ENCODE measurements at regions of chr14 and their contacts with region 1.

Region 1: DNA sequence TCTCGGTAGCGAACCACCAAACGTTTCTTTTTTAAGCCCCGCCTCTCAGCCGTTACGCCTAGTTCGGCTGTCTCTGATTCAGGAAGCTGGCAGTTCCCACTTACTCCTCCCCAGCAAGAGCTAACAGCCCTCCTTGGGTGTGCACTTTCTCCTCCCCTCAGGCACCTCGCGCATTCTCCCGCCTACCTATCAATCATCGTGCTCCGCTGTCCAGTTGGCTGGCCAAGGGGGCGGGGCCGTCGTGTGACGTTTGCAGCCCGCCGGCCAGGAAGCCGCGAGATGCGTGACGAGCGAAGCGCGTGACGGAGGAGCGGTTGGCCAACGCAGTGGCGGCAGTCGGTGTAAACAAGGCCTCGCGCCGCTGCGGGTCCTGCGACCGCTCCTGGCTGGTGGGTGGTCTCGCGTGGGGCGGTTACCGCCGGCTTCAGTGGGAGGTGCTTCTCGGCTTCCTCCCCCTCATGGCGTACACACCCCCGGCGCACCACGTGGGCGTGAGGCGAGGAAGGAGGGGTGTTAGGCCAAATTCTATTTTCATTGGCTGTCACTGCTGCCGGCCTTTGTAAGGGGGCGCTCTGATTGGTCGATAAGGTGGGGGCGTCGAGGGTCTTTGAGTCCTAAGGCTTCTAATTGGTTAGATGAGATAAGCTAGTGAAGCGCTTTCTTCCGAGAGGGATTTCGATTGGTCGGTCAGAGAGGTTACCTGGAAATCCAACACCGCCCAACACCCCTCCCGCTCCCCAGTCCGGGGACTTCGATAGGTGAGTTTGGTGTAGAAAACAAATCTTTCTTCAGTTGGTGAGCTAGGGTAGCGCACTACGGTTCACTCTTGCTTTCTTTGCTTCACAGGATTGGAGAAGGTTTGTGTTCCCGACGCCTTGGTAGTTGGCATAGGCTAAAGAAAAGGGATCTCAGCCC is at the starts of genes DCAF11 and NRL:
- DNase-seq: peak; percentile 97 to 100 (median 99)
- ATAC-seq: peak; percentile 85 to 88 (median 87)
- H3K4me3 ChIP-seq: peak within 1 kb of the TSS; percentile 94 to 99
- H3K4me3 Mint-ChIP-seq: peak within 1 kb of the TSS; percentile 90 to 94 (median 93)
- H3K27ac ChIP-seq: peak within 1 kb of the TSS; percentile 99
- H3K27ac Mint-ChIP-seq: peak within 1 kb of the TSS; percentile 98
- H3K4me1 ChIP-seq: peaks cover 12 to 31% of the 10 kb centered on the region in 2 experiments
- H3K4me1 Mint-ChIP-seq: peaks cover 30 to 42% (median 32%) of the 10 kb centered on the region in 3 donors
- H3K27me3 ChIP-seq: no peaks in the 10 kb centered on the region
- H3K27me3 Mint-ChIP-seq: no peaks in the 10 kb centered on the region
- total RNA-seq, gene DCAF11: 78.5 to 94.1 (median 89.6) TPM
- total RNA-seq, gene NRL: 1.9 to 3.7 (median 3.4) TPM

Region 2: DNA sequence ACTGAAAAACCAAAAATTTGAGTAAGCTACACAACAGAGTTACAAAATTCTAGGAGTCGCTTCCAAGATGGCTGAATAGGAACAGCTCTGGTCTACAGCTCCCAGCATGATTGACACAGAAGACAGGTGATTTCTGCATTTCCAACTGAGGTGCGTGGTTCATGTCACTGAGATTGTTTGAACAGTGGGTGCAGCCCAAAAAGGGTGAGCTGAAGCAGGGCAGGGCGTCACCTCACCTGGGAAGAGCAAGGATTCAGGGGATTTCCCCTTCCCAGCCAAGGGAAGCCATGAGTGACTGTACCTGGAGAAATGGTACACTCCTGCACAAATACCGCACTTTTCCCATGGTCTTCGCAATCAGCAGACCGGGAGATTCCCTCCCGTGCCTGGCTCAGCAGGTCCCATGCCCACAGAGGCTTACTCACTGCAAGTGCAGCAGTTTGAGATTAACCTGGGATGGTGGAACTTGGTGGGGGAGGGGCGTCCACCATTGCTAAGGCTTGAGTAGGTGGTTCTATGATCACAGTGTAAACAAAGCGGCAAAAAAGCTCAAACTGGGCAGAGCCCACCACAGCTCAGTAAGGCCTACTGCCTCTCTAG is 172.3 kb before region 1 on chr14:
- CTCF ChIA-PET with region 1: no interaction called
- POLR2A ChIA-PET with region 1: no interaction called
- DNase-seq: no peak
- ATAC-seq: no peak
- H3K4me3 ChIP-seq: no peak overlapping the region
- H3K4me3 Mint-ChIP-seq: no peak overlapping the region
- H3K27ac ChIP-seq: no peak overlapping the region
- H3K27ac Mint-ChIP-seq: no peak overlapping the region
- H3K4me1 ChIP-seq: no peaks in the 10 kb centered on the region
- H3K4me1 Mint-ChIP-seq: peaks cover 16 to 30% (median 18%) of the 10 kb centered on the region in 3 donors
- H3K27me3 ChIP-seq: no peaks in the 10 kb centered on the region
- H3K27me3 Mint-ChIP-seq: no peaks in the 10 kb centered on the region

Region 3: GRCh38 chr14:24127673-24128072 is 12.9 kb after region 1 on chr14:
- CTCF ChIA-PET with region 1: interaction called in 1 of 2 experiments, 3 read pairs
- POLR2A ChIA-PET with region 1: interaction called, 5 to 10 read pairs
- DNase-seq: no peak
- ATAC-seq: no peak
- H3K4me3 ChIP-seq: no peak overlapping the region
- H3K4me3 Mint-ChIP-seq: no peak overlapping the region
- H3K27ac ChIP-seq: no peak overlapping the region
- H3K27ac Mint-ChIP-seq: no peak overlapping the region
- H3K4me1 ChIP-seq: peaks cover 3 to 12% of the 10 kb centered on the region in 2 experiments
- H3K4me1 Mint-ChIP-seq: peaks cover 11 to 19% (median 15%) of the 10 kb centered on the region in 3 donors
- H3K27me3 ChIP-seq: no peaks in the 10 kb centered on the region
- H3K27me3 Mint-ChIP-seq: no peaks in the 10 kb centered on the region

Region 4: DNA sequence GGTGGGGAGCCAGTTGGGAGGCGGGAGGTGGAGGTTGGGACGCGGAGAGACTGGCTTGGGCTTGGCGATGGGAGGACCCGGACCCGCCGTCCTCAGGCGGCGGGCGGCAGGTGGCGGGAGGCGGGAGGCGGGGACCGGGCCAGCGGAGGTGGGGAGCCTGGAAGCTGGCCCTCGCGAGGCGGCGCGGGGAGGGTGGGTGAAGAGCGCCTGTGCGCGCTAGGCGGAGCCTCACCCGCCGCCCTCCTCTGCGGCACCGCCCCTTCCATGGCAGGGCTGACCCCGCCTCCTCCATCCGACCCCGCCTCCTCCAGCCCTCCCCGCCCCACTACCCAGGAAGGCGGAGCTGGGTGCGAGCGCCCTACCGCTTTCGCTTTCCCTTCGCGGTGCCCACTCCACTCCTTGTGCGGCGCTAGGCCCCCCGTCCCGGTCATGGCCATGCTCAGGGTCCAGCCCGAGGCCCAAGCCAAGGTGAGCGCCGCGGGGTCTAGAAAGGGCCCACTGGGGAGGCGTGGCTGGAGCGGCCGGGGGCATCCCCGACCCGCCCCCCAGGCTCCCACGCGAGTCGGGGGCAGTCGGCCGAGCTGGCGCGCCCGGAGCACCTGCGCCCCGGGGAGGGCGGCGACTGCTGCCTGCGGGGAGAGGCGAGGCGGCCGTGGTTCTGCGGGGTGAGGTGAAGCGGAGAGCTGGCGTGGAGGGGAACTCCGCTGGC is 21.2 kb after region 1 on chr14 and contains the start of gene PSME1:
- CTCF ChIA-PET with region 1: interaction called, 7 to 18 read pairs
- POLR2A ChIA-PET with region 1: interaction called, 5 to 10 read pairs
- DNase-seq: peak; percentile 80 to 97 (median 92)
- ATAC-seq: peak; percentile 94 to 98 (median 95)
- H3K4me3 ChIP-seq: peak within 1 kb of the TSS; percentile 78 to 84
- H3K4me3 Mint-ChIP-seq: peak within 1 kb of the TSS; percentile 89 to 97 (median 91)
- H3K27ac ChIP-seq: peak within 1 kb of the TSS; percentile 79
- H3K27ac Mint-ChIP-seq: peak within 1 kb of the TSS; percentile 91 to 95
- H3K4me1 ChIP-seq: peaks cover 22 to 67% of the 10 kb centered on the region in 2 experiments
- H3K4me1 Mint-ChIP-seq: peaks cover 65 to 68% (median 67%) of the 10 kb centered on the region in 3 donors
- H3K27me3 ChIP-seq: no peaks in the 10 kb centered on the region
- H3K27me3 Mint-ChIP-seq: no peaks in the 10 kb centered on the region
- total RNA-seq, gene PSME1: 221 to 291 (median 259) TPM

Region 5: DNA sequence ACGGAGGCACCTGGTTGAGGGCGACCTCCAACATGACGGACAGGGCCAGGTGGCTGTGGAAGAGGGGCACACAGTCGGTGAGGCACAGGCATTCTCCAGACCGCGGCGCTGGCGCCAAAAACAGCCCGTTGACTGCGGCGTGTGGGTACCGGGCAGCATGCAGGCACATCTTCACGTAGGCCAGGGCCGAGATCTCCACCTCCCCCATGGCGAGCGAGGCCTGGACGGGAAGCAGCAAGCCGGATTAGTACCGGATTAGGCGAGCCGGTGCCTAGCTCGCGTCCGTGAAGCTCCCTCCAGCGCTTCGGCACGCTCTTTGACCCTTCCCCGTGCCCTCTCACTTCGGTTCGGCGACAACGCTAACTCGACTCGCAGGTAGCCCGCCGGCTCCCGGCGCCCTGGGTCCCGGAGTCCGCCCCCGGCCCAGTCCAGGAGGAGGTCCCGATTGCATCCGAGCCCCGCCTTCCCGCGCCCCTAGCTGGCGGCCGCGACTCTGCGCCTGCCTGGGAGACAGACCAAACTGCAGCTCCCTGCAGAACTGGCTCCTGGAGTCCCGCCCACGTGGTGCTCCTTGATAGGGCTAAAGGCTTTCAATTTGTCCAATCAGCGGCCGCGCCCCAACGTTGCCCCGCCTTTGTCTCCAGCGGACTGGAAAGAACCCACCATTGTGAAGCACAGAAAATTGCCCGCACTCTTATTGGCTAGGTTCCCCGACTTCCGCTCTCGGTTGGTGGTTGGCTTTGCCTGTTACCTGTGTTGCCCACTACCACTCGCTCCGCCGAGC is 26.5 kb after region 1 on chr14 and contains the start of gene EMC9:
- CTCF ChIA-PET with region 1: interaction called, 7 to 24 read pairs
- POLR2A ChIA-PET with region 1: interaction called, 4 to 23 read pairs
- DNase-seq: peak; percentile 98 to 100 (median 99)
- ATAC-seq: peak; percentile 90 to 93 (median 90)
- H3K4me3 ChIP-seq: peak within 1 kb of the TSS; percentile 69 to 90
- H3K4me3 Mint-ChIP-seq: peak within 1 kb of the TSS; percentile 85 to 97 (median 88)
- H3K27ac ChIP-seq: peak within 1 kb of the TSS; percentile 63
- H3K27ac Mint-ChIP-seq: peak within 1 kb of the TSS; percentile 90 to 92
- H3K4me1 ChIP-seq: peaks cover 22 to 72% of the 10 kb centered on the region in 2 experiments
- H3K4me1 Mint-ChIP-seq: peaks cover 80 to 84% (median 82%) of the 10 kb centered on the region in 3 donors
- H3K27me3 ChIP-seq: no peaks in the 10 kb centered on the region
- H3K27me3 Mint-ChIP-seq: no peaks in the 10 kb centered on the region
- total RNA-seq, gene EMC9: 9.3 to 29.8 (median 20.8) TPM

Region 6: DNA sequence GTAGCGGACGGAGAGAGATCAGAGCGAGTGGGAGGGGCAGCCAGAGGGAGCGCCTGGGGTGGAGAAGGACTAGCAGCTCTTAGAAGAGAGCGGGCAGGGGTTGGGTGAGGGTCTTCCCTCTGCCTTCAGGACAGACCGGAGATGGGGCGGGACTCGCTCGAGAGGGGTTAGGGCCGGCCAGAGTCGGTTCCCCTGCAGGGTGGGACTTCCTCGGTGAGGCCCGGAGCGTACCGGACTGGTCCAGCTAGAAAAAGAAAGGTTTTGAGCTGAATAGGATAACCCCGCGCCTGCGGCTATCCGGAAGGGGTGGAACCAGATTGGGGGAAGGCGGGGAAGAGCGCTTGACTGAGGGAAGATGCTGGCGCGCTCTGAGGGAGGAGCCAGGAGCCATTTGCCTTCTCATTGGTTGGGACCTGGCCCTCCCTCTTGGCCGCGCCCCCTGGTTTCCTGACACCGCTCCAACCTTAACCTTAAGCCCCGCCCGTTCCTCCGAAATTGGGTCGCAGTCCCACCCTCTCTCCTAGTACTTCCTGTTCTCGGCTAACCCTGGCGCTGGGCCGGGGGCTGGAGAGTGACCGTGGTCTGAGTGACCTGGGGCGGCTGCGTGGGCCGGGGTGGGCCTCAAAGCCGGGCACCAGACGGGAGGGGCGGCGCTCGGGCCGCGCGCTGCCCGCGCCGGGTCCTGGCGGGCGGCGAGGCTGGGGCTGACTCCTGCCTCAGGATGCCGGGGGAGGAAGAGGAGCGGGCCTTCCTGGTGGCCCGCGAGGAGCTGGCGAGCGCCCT is 32.4 kb after region 1 on chr14 and contains the start of gene RNF31:
- CTCF ChIA-PET with region 1: interaction called, 3 to 24 read pairs
- POLR2A ChIA-PET with region 1: interaction called, 8 to 23 read pairs
- DNase-seq: peak; percentile 90 to 99 (median 97)
- ATAC-seq: peak; percentile 89 to 93 (median 90)
- H3K4me3 ChIP-seq: peak within 1 kb of the TSS; percentile 69 to 91
- H3K4me3 Mint-ChIP-seq: peak within 1 kb of the TSS; percentile 96 to 99 (median 97)
- H3K27ac ChIP-seq: peak within 1 kb of the TSS; percentile 82
- H3K27ac Mint-ChIP-seq: peak within 1 kb of the TSS; percentile 95 to 99
- H3K4me1 ChIP-seq: peaks cover 17 to 58% of the 10 kb centered on the region in 2 experiments
- H3K4me1 Mint-ChIP-seq: peaks cover 64 to 69% (median 66%) of the 10 kb centered on the region in 3 donors
- H3K27me3 ChIP-seq: no peaks in the 10 kb centered on the region
- H3K27me3 Mint-ChIP-seq: no peaks in the 10 kb centered on the region
- total RNA-seq, gene RNF31: 67.7 to 131 (median 100) TPM

Region 7: GRCh38 chr14:24160850-24161804 is 46.3 kb after region 1 on chr14 and contains the start of gene IRF9:
- CTCF ChIA-PET with region 1: interaction called, 5 to 20 read pairs
- POLR2A ChIA-PET with region 1: interaction called, 3 to 9 read pairs
- DNase-seq: peak; percentile 90 to 99 (median 96)
- ATAC-seq: peak; percentile 89 to 90 (median 90)
- H3K4me3 ChIP-seq: peak within 1 kb of the TSS; percentile 86 to 98
- H3K4me3 Mint-ChIP-seq: peak within 1 kb of the TSS; percentile 92 to 94 (median 92)
- H3K27ac ChIP-seq: peak within 1 kb of the TSS; percentile 89
- H3K27ac Mint-ChIP-seq: peak within 1 kb of the TSS; percentile 98 to 99
- H3K4me1 ChIP-seq: peaks cover 8 to 61% of the 10 kb centered on the region in 2 experiments
- H3K4me1 Mint-ChIP-seq: peaks cover 54 to 58% (median 55%) of the 10 kb centered on the region in 3 donors
- H3K27me3 ChIP-seq: no peaks in the 10 kb centered on the region
- H3K27me3 Mint-ChIP-seq: no peaks in the 10 kb centered on the region
- total RNA-seq, gene IRF9: 201 to 285 (median 215) TPM

Region 8: GRCh38 chr14:24299255-24300195 is 184.7 kb after region 1 on chr14 and contains the starts of genes DHRS1 and NOP9:
- CTCF ChIA-PET with region 1: no interaction called
- POLR2A ChIA-PET with region 1: interaction called, 5 to 11 read pairs
- DNase-seq: peak; percentile 70 to 96 (median 89)
- ATAC-seq: peak; percentile 86 to 92 (median 90)
- H3K4me3 ChIP-seq: peak within 1 kb of the TSS; percentile 70 to 82
- H3K4me3 Mint-ChIP-seq: peak within 1 kb of the TSS; percentile 92 to 95 (median 93)
- H3K27ac ChIP-seq: peak within 1 kb of the TSS; percentile 84
- H3K27ac Mint-ChIP-seq: peak within 1 kb of the TSS; percentile 95 to 97
- H3K4me1 ChIP-seq: peaks cover 23 to 32% of the 10 kb centered on the region in 2 experiments
- H3K4me1 Mint-ChIP-seq: peaks cover 45 to 60% (median 49%) of the 10 kb centered on the region in 3 donors
- H3K27me3 ChIP-seq: no peaks in the 10 kb centered on the region
- H3K27me3 Mint-ChIP-seq: no peaks in the 10 kb centered on the region
- total RNA-seq, gene DHRS1: 34.2 to 47.6 (median 39.1) TPM
- total RNA-seq, gene NOP9: 29.7 to 33.2 (median 30.8) TPM

Measured in T-cell (primary cell).